ENCODE measurements at regions of chr13 and their contacts with region 1.

Region 1: DNA sequence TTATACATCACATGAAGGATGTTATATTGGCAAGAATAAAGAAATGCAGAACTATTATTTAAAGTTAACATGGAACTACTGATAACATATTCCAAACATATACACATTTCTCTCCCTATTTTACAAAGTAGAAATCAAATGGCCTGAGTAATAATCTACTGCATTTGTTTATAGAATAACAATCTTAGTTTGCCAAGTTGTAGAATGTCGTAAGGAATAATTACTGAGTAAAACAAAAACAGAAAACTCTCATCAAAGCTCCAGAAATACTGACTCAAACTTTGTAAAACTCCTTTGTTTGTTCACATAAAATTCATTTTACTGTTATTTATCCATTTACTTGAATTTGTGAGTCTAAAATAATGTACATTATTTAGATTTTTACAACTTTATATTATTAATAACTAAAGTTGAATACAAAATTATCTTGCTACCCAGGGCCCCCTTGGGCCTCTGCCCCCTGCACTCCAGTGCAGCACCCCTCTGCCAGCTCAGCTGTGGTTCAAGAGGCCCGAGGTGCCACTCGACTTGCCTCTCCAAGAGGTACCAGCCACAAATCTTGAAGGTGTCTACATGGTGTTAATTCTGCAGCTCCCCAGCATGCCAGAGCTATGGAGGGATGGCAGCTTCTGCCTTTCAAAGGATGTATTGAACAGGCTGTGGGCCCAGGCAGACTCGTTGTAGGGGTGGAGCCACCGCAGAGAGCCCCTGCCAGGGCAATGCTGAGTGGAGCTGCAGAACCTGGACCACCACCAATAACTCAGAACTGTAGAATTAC is 2819.7 kb downstream of the PCDH9 start:
- DNase-seq: no peak
- H3K4me3 ChIP-seq: no peak overlapping the region
- H3K27ac ChIP-seq: no peak overlapping the region
- H3K4me1 ChIP-seq: no peaks in the 10 kb centered on the region
- H3K27me3 ChIP-seq: no peaks in the 10 kb centered on the region
- CTCF ChIP-seq: no peak
- POLR2A ChIP-seq: no peak

Region 2: DNA sequence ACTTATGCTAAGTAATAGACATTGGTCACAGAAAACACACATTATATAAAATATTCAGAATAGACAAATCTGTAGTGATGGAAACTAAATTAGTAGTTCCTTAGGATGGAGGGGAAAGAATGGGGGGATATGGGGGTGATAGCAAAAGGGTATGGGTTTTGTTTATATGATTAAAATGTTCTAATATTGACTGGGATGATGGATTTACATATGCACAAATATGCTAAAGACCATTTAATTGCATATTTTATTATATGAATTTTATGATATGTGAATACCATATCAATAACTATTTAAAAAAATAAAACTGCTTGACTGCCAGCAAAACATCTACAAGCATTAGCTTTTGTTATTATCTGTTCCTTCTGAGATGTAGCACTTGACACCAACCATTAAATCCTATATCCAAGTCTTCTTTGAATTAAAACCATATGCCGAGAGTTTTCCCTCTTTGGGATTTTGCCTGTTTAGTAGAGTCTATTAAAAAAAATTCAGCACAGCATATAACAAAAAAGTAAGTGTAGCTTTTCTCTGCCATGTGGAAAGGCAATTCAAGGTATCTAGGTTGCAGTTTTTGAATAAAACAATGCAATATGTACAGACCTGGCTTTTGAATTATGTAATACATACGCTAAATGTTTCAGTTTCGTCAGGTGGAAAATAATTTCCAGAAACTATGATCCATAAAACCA is 410.7 kb before region 1 on chr13:
- intact Hi-C with region 1: loop called (anchors 5 kb)
- DNase-seq: no peak
- H3K4me3 ChIP-seq: no peak overlapping the region
- H3K27ac ChIP-seq: no peak overlapping the region
- H3K4me1 ChIP-seq: no peaks in the 10 kb centered on the region
- H3K27me3 ChIP-seq: no peaks in the 10 kb centered on the region
- CTCF ChIP-seq: no peak
- POLR2A ChIP-seq: no peak